CD8-positive, alpha-beta T cell (primary cell): ENCODE measurements at regions of chr14 and their contacts with region 1.

Region 1: DNA sequence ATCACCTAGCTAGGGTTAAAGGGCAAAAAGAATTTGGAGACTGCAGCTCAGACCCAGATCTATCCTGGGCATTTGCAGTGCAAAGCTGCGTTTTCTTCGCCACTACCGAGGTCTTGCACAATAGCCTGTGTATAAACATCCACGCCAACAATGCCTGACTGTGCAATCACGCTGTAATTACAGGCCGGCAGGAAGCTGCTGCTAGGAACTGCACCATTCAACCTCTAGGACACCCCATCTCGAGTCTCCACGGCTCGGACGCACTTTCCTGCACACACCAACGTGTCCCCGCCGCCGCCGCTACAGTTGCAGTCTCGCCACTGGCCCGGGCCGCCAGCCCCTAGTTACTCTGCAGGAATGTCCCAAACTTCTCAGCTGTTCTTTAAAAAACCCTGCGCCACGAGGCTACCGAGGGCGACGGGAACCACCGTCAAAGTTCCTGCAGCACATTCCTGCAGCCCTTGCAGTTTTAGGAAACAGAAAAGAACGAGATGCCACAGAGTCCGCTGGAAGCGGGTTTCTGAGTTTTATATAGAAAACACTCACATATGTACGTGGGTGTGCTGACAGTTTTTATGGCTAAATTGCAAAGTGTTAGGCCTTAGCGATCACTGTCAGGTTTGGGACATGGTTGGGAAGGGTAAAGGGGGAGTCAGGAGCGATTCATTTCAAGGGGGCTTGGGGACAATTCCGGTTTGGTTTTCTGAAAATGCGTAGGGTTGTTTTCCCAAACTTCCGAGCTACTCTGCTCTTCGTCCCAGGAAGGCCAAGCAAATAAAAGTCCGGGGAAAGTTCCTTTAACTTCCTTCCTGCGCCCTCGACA is 65.5 kb upstream of the PTGR2 start:
- DNase-seq: peak; percentile 32 to 82 (median 67)
- ATAC-seq: peak; percentile 62
- H3K4me3 ChIP-seq: peak overlapping the region; percentile 85 to 88
- H3K4me3 Mint-ChIP-seq: peak overlapping the region; percentile 95
- H3K27ac ChIP-seq: peak overlapping the region; percentile 83 to 89
- H3K27ac Mint-ChIP-seq: peak overlapping the region; percentile 94
- H3K4me1 ChIP-seq: peaks cover 57% of the 10 kb centered on the region
- H3K4me1 Mint-ChIP-seq: peaks cover 59% of the 10 kb centered on the region
- H3K27me3 ChIP-seq: no peaks in the 10 kb centered on the region
- H3K27me3 Mint-ChIP-seq: no peaks in the 10 kb centered on the region
- CTCF ChIP-seq: no peak

Region 2: GRCh38 chr14:73613046-73613383 is 173.1 kb before region 1 on chr14:
- CTCF ChIA-PET with region 1: no interaction called
- POLR2A ChIA-PET with region 1: interaction called, 13 read pairs
- intact Hi-C with region 1: no loop called
- DNase-seq: no peak
- ATAC-seq: no peak
- H3K4me3 ChIP-seq: peak overlapping the region; percentile 58 to 94
- H3K4me3 Mint-ChIP-seq: peak overlapping the region; percentile 86
- H3K27ac ChIP-seq: peak overlapping the region; percentile 37 to 77
- H3K27ac Mint-ChIP-seq: peak overlapping the region; percentile 82
- H3K4me1 ChIP-seq: peaks cover 3% of the 10 kb centered on the region
- H3K4me1 Mint-ChIP-seq: peaks cover 5% of the 10 kb centered on the region
- H3K27me3 ChIP-seq: no peaks in the 10 kb centered on the region
- H3K27me3 Mint-ChIP-seq: peaks cover 3% of the 10 kb centered on the region
- CTCF ChIP-seq: no peak

Region 3: GRCh38 chr14:73713803-73714655 is 72.1 kb before region 1 on chr14 and contains the start of gene PNMA1:
- CTCF ChIA-PET with region 1: interaction called, 4 read pairs
- POLR2A ChIA-PET with region 1: interaction called, 16 read pairs
- intact Hi-C with region 1: no loop called
- DNase-seq: peak; percentile 67 to 94 (median 87)
- ATAC-seq: peak; percentile 72
- H3K4me3 ChIP-seq: peak within 1 kb of the TSS; percentile 71 to 92
- H3K4me3 Mint-ChIP-seq: peak within 1 kb of the TSS; percentile 92
- H3K27ac ChIP-seq: peak within 1 kb of the TSS; percentile 76 to 77
- H3K27ac Mint-ChIP-seq: peak within 1 kb of the TSS; percentile 96
- H3K4me1 ChIP-seq: peaks cover 10% of the 10 kb centered on the region
- H3K4me1 Mint-ChIP-seq: peaks cover 34% of the 10 kb centered on the region
- H3K27me3 ChIP-seq: no peaks in the 10 kb centered on the region
- H3K27me3 Mint-ChIP-seq: no peaks in the 10 kb centered on the region
- CTCF ChIP-seq: no peak
- total RNA-seq, gene PNMA1: 39.4 to 39.8 TPM

Region 4: GRCh38 chr14:73741386-73741875 is 44.7 kb before region 1 on chr14:
- CTCF ChIA-PET with region 1: interaction called, 15 read pairs
- POLR2A ChIA-PET with region 1: interaction called, 31 read pairs
- intact Hi-C with region 1: no loop called
- DNase-seq: peak in 7 of 9 experiments; percentile 61 to 86 (median 75)
- ATAC-seq: peak; percentile 79
- H3K4me3 ChIP-seq: peak overlapping the region; percentile 25 to 42
- H3K4me3 Mint-ChIP-seq: peak overlapping the region; percentile 80
- H3K27ac ChIP-seq: peak overlapping the region; percentile 29 to 83
- H3K27ac Mint-ChIP-seq: peak overlapping the region; percentile 94
- H3K4me1 ChIP-seq: peaks cover 82% of the 10 kb centered on the region
- H3K4me1 Mint-ChIP-seq: peaks cover 74% of the 10 kb centered on the region
- H3K27me3 ChIP-seq: no peaks in the 10 kb centered on the region
- H3K27me3 Mint-ChIP-seq: no peaks in the 10 kb centered on the region
- CTCF ChIP-seq: no peak

Region 5: DNA sequence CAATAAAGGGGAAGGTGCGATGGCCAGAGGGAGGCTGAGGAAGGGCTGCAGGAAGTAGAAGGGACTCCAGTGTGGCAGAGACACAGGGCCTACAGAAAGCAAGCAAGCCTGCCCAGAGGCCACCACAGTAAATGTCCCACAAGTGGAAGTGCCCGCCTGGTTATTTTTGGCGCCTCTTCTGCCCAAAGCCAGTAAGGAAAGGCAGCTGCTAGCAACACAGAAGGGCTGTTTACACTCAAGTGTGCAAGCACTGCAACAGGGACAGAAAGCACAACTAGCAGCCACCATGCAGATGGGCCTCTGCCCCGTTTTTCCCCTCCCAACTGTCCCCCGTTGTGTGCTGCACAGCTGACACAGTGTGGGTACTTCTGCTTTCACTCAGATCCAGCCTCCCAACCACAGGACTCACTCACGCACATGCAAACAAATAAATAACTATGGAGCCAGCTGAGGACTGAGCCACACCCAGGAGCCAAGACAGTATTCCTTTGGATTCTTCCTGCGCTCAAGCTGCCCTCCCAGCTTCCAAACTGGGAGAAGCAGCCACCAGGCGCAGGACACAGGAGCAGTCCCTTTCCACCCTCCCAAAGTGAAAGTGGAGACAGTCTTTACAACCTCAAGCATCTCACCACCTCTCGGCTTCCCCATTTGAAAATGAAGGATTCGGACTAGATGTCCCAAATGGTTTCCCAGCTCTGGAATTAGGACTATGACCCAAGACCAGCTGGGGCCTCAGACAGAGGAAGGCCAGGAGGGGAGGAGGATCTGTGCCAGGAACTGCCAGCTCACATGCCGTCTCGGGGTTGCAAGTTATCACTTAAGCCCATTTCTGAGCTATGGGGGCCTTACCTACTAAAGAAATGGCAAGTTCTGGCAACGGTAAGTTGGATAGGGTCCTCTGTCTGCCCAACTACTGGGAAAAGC is 31.9 kb before region 1 on chr14:
- CTCF ChIA-PET with region 1: interaction called, 61 read pairs
- POLR2A ChIA-PET with region 1: interaction called, 219 read pairs
- intact Hi-C with region 1: loop called (anchors 5 kb)
- DNase-seq: peak in 3 of 9 experiments; percentile 43 to 74 (median 61)
- ATAC-seq: peak; percentile 17
- H3K4me3 ChIP-seq: peak overlapping the region; percentile 38 to 55
- H3K4me3 Mint-ChIP-seq: peak overlapping the region; percentile 85
- H3K27ac ChIP-seq: peak overlapping the region; percentile 67 to 85
- H3K27ac Mint-ChIP-seq: peak overlapping the region; percentile 97
- H3K4me1 ChIP-seq: peaks cover 94% of the 10 kb centered on the region
- H3K4me1 Mint-ChIP-seq: peaks cover 92% of the 10 kb centered on the region
- H3K27me3 ChIP-seq: no peaks in the 10 kb centered on the region
- H3K27me3 Mint-ChIP-seq: no peaks in the 10 kb centered on the region
- CTCF ChIP-seq: no peak

Region 6: GRCh38 chr14:73771848-73772638 is 14.0 kb before region 1 on chr14:
- CTCF ChIA-PET with region 1: interaction called, 22 read pairs
- POLR2A ChIA-PET with region 1: interaction called, 59 read pairs
- intact Hi-C with region 1: loop called (anchors 1 to 2 kb)
- DNase-seq: peak in 7 of 9 experiments; percentile 45 to 86 (median 74)
- ATAC-seq: peak; percentile 75
- H3K4me3 ChIP-seq: peak overlapping the region; percentile 1 to 38
- H3K4me3 Mint-ChIP-seq: peak overlapping the region; percentile 66
- H3K27ac ChIP-seq: peak overlapping the region; percentile 41 to 77
- H3K27ac Mint-ChIP-seq: peak overlapping the region; percentile 94
- H3K4me1 ChIP-seq: peaks cover 70% of the 10 kb centered on the region
- H3K4me1 Mint-ChIP-seq: peaks cover 74% of the 10 kb centered on the region
- H3K27me3 ChIP-seq: no peaks in the 10 kb centered on the region
- H3K27me3 Mint-ChIP-seq: no peaks in the 10 kb centered on the region
- CTCF ChIP-seq: no peak

Region 7: DNA sequence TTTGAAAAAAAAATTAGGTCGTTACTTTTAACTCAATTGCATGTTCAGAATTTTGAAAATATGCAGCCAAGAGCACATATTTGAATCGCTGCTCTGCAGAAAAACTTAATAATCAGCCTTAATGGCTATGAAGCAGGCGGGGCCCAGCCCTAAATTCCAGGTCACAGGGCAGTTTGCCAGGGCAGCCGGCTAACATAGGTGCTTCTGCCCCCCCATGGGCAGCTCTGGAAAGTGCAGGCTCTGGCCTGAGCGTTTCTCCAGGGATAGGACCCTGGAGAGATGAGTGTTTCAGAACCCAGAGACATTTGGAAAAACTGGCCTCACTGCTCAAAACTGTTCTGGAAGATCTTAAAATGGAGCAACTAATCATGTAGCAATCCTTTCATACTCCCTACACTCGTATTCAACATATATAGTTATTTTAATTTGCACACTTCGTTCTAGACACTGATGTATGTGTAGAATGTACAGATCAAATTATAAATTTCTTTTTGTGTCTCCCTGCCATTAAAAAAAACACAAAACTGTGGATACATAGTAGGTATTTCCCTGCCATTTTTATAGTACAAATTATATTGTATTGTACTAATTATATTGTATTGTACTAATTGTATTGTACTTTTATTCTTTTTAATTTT is 39.6 kb after region 1 on chr14:
- CTCF ChIA-PET with region 1: interaction called, 22 read pairs
- POLR2A ChIA-PET with region 1: interaction called, 3 read pairs
- intact Hi-C with region 1: loop called in 1 of 2 experiments (anchors 1 kb)
- DNase-seq: peak; percentile 48 to 86 (median 81)
- ATAC-seq: peak; percentile 97
- H3K4me3 ChIP-seq: no peak overlapping the region
- H3K4me3 Mint-ChIP-seq: no peak overlapping the region
- H3K27ac ChIP-seq: no peak overlapping the region
- H3K27ac Mint-ChIP-seq: no peak overlapping the region
- H3K4me1 ChIP-seq: no peaks in the 10 kb centered on the region
- H3K4me1 Mint-ChIP-seq: peaks cover 10% of the 10 kb centered on the region
- H3K27me3 ChIP-seq: no peaks in the 10 kb centered on the region
- H3K27me3 Mint-ChIP-seq: no peaks in the 10 kb centered on the region
- CTCF ChIP-seq: peak; percentile 86